Mammary epithelial cell (primary cell): ENCODE measurements at regions of chr5 and their contacts with region 1.

Region 1: DNA sequence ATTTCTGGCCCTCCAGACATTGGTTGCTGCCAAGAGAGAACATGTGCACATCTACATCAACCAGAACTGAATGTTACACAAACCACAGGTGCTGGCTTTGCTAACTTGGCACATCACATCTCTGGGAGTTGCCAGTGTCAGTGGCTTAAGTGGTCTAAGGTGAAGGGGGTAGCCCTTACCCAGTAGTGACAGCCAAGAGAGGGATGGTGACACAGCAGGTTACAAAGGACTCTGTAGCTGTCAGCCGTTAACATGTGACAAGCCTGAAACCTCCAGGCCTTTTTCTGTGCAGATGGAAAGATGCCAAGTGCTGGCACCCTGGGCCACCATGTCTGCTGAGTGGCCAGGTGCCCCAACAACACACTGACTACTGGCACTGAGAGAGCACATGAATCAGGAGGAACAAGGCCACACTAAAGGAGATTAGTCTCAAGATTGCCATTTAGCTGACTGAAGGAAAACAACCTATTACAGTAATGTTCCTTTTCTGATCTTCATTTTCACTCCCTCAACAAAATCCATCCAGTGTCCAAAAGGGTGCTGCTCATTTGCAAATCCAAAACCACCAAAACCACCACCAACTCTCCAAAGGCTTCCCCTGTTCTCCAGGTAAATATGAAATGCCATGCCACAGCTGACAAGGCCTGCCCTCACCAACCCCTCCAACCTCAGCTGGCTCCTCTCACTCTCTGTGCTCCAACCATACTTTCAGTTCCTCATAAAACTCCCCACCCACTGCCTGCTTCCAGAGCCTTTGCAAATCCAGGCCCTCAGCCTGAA is 20.2 kb downstream of the SIL1 start:
- DNase-seq: no peak
- H3K4me3 ChIP-seq: no peak overlapping the region
- H3K27ac ChIP-seq: no peak overlapping the region
- H3K4me1 ChIP-seq: peaks cover 37% of the 10 kb centered on the region
- H3K27me3 ChIP-seq: no peaks in the 10 kb centered on the region
- CTCF ChIP-seq: no peak

Region 2: DNA sequence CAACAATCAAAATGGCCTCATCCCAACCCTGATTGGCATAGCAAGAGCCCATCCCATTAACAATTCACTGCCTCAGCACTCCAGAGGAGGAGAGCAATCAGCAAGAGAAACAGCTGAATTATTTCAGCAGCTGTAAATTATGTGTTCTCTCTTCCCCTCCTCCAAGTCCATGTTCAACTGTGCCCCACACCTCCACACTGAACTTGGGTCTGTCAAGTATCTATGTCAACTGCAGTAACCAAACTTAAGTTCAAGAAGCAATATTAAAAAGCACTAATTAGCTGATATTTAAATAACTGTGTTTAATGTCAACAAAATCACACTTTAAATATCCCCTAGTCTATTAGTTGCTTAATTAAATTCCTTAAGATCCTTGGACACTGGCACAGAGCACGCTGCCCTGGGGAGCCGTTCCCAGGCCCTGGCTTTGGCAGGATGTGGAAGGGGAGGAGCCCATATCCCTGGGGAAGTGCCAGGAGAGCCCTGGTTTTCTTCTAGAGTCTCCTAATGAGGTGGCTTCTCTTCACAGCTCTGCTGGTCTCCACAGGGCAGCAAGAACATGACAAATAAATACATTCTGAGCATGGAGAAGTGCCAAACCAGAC is 30.4 kb before region 1 on chr5:
- CTCF ChIA-PET with region 1: no interaction called
- dilution Hi-C with region 1: no loop called
- in situ Hi-C with region 1: no loop called
- intact Hi-C with region 1: loop called (anchors 2 kb)
- DNase-seq: peak; percentile 52
- H3K4me3 ChIP-seq: no peak overlapping the region
- H3K27ac ChIP-seq: no peak overlapping the region
- H3K4me1 ChIP-seq: peaks cover 42% of the 10 kb centered on the region
- H3K27me3 ChIP-seq: no peaks in the 10 kb centered on the region
- CTCF ChIP-seq: no peak

Region 3: DNA sequence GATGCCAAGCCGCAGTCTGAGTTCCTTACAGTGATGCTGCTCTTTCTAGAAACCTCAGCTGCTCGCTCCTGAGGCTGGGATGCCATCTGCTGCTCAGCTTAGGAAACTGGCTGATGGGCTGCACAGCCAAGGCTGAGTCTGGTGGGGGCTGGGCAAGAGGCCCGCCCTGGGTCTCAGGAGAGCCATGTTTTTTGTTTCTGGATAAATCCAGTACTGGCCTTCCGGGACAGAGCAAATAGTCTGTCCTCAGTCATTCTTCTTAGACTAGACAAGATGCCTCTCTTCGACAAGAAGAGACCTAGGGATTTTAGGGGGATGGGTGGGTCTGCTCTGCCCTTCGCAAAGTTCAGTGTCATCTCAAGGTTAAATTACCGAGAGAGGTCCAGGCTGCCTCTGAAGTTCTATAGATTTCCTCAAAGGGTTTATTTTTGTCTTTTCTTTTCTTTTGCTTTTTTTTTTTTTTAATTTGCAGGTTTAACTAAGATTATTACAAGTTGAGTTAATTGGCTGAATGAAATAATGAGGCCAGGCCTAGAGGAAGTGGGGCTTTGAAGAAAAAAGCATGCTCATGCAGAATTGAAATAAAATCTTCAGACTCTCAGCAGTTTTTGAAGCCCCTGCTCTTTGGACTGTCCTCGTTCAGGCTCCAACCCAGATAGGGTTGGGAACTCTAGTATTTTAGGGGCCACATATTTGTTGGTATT is 84.9 kb after region 1 on chr5:
- CTCF ChIA-PET with region 1: no interaction called
- dilution Hi-C with region 1: no loop called
- in situ Hi-C with region 1: no loop called
- intact Hi-C with region 1: no loop called
- DNase-seq: peak; percentile 79
- H3K4me3 ChIP-seq: no peak overlapping the region
- H3K27ac ChIP-seq: no peak overlapping the region
- H3K4me1 ChIP-seq: peaks cover 6% of the 10 kb centered on the region
- H3K27me3 ChIP-seq: no peaks in the 10 kb centered on the region
- CTCF ChIP-seq: peak; percentile 90 to 98